Right ventricle myocardium superior (tissue), 1 donor: ENCODE measurements at regions of chr2 and their contacts with region 1.

Region 1: DNA sequence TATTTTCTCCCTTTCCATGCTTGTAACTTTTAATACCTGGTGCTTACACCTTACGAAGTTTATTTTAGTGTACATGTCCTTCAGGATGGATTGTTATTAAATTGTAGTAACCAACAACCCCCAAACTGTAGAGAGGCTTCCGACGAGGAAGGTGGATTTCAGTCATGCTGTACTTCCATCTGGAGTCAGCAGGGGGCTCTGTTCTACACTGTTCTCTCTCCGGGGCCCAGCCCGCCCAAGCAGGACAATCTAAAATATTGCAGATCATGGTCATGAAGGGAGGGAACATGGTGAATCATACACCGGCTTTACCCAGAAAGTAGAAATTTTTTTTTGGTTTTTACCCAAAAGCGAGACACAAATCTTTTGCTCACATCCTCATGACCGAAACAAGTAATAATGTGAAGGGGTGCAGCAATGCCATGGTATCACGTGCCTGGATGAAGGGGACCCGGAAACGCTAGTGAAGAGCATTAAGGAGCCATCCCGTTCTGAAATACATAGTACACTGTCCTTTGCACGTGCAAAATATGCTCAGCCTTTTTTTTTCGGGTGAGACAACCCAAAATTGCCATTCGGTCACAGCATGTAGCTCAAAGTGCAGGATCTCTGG is 884.8 kb downstream of the EPHA4 start:
- DNase-seq: peak; percentile 65
- ATAC-seq: peak; percentile 84

Region 2: GRCh38 chr2:220455351-220455990 is 231.9 kb before region 1 on chr2:
- intact Hi-C with region 1: no loop called
- DNase-seq: no peak
- ATAC-seq: peak; percentile 20

Region 3: GRCh38 chr2:221104361-221104811 is 417.0 kb after region 1 on chr2:
- intact Hi-C with region 1: loop called (anchors 2 kb)
- DNase-seq: peak; percentile 90
- ATAC-seq: peak; percentile 98